Posterior cingulate gyrus (tissue), 11 donors: ENCODE measurements at regions of chr11 and their contacts with region 1.

Region 1: DNA sequence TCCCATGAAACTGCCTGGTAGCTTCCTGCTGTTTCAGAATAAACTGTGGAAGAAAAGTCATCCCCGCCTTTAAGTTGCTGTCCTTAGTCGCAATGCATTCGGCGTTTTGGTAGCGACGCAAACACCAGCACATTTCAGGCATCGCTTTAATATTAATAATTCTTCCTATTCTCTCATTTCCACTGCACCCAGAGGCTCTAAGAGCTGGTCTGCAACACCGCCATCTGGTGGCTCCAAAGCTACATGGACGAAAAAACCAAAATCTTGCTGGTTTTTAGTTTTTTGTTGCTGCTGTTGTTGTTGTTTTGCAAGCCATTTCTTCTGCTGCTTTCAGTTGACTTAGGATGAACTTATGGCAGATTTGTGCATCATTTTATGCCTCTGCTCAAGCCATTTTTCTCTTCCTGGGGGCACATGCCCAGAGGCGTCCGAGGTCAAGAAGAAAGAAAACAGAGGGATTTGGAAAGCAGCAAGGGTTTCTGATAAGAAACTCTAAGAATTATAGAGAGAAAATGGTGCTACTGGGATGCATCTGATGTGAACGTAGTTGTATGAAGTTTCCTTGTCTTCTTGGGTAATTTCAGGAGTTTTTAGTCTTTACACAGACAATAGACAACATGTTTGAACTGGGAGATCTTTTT is 345.4 kb upstream of the KIRREL3 start:
- DNase-seq: peak in 8 of 10 donors; percentile 22 to 85 (median 62)

Region 2: GRCh38 chr11:126440792-126441514 is 905.0 kb before region 1 on chr11:
- intact Hi-C with region 1: loop called (anchors 2 kb)
- DNase-seq: peak; percentile 67 to 97 (median 84)

Region 3: GRCh38 chr11:126607374-126607773 is 738.6 kb before region 1 on chr11:
- intact Hi-C with region 1: loop called (anchors 10 kb)
- DNase-seq: peak; percentile 48 to 96 (median 76)

Region 4: GRCh38 chr11:126716456-126717083 is 629.4 kb before region 1 on chr11:
- intact Hi-C with region 1: loop called (anchors 10 kb)
- DNase-seq: peak in 6 of 10 donors; percentile 39 to 93 (median 72)